Lower leg skin (tissue), 4 donors: ENCODE measurements at regions of chr9 and their contacts with region 1.

Region 1: GRCh38 chr9:69174616-69175463 is 763 bp downstream of the TJP2 start:
- DNase-seq: peak; percentile 79 to 87
- H3K4me3 ChIP-seq: peak overlapping the region; percentile 50
- CTCF ChIP-seq: no peak
- POLR2A ChIP-seq: no peak

Region 2: DNA sequence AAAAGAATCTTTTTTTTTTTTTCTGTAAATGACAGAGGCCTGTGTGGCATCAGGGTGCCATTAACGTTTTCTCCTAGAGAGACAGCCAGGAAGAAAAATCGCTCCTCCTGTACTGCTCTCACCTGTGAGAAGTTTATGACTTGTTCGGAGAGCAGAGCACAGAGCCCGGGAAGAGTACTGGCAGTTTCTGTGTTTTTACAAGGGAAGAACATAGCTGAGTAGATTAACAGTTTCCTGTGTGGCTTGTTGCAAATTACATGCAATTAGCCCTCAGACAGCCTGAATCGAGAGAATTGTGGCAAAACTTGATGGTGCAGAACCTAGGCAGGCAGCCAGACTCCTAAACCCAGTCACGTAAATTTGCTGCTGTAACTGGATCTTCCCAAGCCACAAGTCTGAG is 193.1 kb before region 1 on chr9:
- intact Hi-C with region 1: no loop called
- DNase-seq: no peak
- H3K4me3 ChIP-seq: no peak overlapping the region
- CTCF ChIP-seq: no peak
- POLR2A ChIP-seq: no peak

Region 3: GRCh38 chr9:69121828-69122548 is 52.9 kb before region 1 on chr9:
- intact Hi-C with region 1: loop called (anchors 10 kb)
- DNase-seq: peak; percentile 35 to 92
- H3K4me3 ChIP-seq: peak overlapping the region; percentile 74
- CTCF ChIP-seq: no peak
- POLR2A ChIP-seq: no peak

Region 4: DNA sequence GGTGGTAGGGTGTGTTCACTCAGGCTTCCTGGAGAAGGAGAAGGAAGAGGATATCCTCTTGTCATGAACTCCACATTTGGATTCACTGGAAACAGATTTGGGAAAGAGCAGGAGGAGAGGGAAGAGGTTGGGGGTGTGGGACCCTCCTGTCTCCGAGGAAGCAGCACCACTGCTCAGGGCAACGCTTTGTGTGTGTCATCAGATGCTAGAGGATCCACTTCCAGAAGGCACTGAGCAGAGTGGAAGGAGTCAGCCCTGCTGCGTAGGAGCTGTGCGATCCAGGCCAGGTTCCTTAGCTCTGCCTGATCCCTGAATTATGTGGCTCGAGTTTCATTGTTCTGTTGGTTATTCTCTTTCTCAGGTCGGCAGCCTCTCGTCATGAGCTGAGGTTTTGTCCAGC is 38.1 kb before region 1 on chr9:
- intact Hi-C with region 1: no loop called
- DNase-seq: peak in 1 of 2 donors; percentile 8
- H3K4me3 ChIP-seq: no peak overlapping the region
- CTCF ChIP-seq: no peak
- POLR2A ChIP-seq: no peak

Region 5: DNA sequence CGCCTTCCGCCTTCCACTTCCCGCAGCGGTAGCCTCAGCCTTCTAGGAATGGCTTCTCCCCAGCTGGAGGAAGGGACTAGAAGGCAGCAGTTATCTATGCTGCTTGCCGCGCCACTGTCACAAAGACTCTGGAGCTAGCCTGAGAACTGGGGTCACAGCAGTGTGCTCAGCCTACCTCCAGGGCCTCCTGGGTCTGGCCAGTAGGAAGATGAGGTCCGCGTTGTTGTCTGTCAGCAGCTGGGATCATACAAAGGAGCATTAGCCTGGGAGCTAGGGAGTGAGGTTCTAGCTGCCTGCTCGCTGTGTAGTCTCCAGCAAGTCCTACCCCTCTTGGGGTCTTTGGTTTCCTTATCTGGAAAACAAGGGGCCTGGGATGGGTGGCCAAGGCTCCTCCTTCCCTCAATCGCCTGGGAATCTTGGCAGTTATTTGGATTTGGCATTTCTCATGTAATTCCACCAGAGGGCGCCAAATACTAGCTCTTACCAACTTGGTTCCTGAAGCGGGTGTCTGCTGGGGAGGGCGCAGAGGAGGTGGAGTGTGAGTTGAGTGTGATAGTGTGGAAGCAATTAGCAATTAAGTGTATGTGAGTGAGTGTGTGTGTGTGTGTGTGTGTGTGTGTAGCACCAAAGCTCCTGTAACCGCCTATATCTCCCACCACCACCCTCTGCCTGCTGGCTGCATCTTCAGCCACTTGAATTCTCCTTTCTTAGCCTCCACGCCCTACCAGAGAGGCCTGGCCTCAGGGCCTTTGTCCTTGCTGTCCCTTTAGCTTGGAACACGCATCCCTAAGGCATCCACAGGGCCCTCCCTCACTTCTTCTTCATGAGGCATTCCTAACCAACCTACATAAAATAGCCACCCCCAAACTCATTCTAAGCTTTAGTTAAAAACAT is 247.3 kb after region 1 on chr9:
- intact Hi-C with region 1: no loop called
- DNase-seq: peak in 1 of 2 donors; percentile 44
- H3K4me3 ChIP-seq: no peak overlapping the region
- CTCF ChIP-seq: peak in 1 of 3 donors; percentile 44
- POLR2A ChIP-seq: no peak